HCT116 (cell line): ENCODE measurements at regions of chr17 and their contacts with region 1.

Region 1: GRCh38 chr17:27601069-27601975 is 29.7 kb upstream of the LGALS9 start:
- DNase-seq: peak; percentile 50
- ATAC-seq: peak; percentile 57
- H3K4me3 ChIP-seq: no peak overlapping the region
- H3K27ac ChIP-seq: 0 out of 2 replicates have a peak overlapping the region, but pooled peaks have one; percentile 14
- H3K4me1 ChIP-seq: peaks cover 12 to 16% of the 10 kb centered on the region in 2 experiments
- H3K27me3 ChIP-seq: no peaks in the 10 kb centered on the region
- CTCF ChIP-seq: peak; percentile 77 to 97 (median 87); a peak in 5 of 6 replicates
- POLR2A ChIP-seq: no peak
- RAD21 ChIP-seq: peak; percentile 83

Region 2: DNA sequence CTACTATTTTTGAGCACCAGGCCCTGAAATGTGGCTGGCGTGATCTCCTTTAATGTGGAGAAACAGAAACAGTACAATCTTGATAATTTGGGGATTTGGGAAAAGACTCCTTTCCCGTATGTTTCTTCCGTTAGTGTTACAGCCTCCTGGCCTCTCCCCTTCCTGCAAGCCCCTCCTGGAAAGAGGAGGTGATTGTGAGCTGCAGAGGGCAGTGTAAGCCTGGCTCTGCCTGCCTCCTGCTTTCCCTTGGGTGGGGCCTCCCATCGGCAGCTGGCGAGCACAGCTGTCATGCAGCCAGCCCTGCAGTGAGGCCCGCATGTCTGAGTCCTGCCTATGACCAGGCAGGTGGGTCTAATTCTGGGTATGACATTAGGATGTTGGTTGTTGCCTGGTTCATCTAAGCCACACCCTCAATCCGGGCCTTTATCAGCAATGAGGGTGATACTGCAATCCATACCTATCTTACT is 356.1 kb before region 1 on chr17:
- CTCF ChIA-PET with region 1: interaction called, 11 read pairs
- POLR2A ChIA-PET with region 1: no interaction called
- RAD21 ChIA-PET with region 1: interaction called, 3 to 6 read pairs
- intact Hi-C with region 1: loop called (anchors 2 kb)
- DNase-seq: peak; percentile 69
- ATAC-seq: peak; percentile 99
- H3K4me3 ChIP-seq: 0 out of 4 replicates have a peak overlapping the region, but pooled peaks of 1 of the 2 experiments have one; percentile 1
- H3K27ac ChIP-seq: no peak overlapping the region
- H3K4me1 ChIP-seq: peaks cover 22 to 39% of the 10 kb centered on the region in 2 experiments
- H3K27me3 ChIP-seq: no peaks in the 10 kb centered on the region
- CTCF ChIP-seq: peak; percentile 60 to 92 (median 73)
- POLR2A ChIP-seq: no peak
- RAD21 ChIP-seq: peak; percentile 98

Region 3: GRCh38 chr17:27353461-27354050 is 247.8 kb before region 1 on chr17:
- CTCF ChIA-PET with region 1: interaction called, 27 read pairs
- POLR2A ChIA-PET with region 1: interaction called, 6 read pairs
- RAD21 ChIA-PET with region 1: interaction called, 5 to 7 read pairs
- intact Hi-C with region 1: loop called (anchors 1 kb)
- DNase-seq: peak; percentile 78
- ATAC-seq: peak; percentile 74
- H3K4me3 ChIP-seq: peak overlapping the region; percentile 85 to 95
- H3K27ac ChIP-seq: peak overlapping the region; percentile 93
- H3K4me1 ChIP-seq: peaks cover 24 to 48% of the 10 kb centered on the region in 2 experiments
- H3K27me3 ChIP-seq: no peaks in the 10 kb centered on the region
- CTCF ChIP-seq: peak; percentile 58 to 85 (median 73)
- POLR2A ChIP-seq: peak; percentile 43
- RAD21 ChIP-seq: peak; percentile 70

Region 4: DNA sequence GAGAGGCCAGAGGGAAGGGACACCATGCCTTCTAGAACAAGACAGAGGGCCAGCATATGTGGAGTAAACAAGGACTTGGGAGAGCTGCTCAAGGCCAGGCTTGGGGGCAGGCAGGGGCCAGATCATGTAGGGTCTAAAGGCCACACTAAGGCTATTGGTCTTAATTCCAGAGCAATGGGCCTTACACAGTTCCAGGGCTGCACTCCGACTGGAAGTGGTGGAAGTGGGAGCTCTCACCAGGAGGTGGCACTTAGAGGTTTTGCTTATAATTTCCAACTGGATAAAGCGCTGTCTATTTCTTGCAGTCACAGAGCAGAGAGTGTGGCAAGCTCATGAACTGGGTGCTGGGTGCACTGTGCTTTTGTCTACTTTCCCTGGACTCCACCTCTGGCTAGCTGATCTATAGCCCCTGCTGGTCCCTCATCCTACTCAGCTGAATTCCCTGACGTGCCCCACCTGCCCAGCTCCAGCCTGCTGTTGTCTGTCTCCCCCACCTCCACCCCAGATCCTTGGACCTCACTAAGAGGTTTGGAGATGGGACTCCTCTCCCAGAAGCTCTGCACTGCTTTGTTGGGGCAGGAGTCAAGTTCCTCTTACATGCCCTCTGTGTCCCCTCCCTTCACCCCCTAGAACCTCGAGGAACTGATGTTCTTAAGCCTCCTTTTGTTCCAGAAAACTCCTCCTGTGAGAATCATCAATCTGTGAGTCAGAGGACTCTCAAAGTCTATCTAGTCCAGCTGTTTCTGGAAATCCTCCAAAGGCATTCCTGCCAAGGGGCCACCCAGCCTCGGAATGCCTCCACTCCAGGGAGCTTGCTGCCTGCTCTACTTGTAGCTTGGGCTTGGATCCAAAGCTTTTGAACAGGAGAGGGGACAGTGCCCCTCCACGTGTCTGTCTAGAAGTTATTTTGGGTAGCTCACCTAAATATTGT is 193.1 kb before region 1 on chr17:
- CTCF ChIA-PET with region 1: interaction called, 10 read pairs
- POLR2A ChIA-PET with region 1: no interaction called
- RAD21 ChIA-PET with region 1: interaction called in 1 of 2 experiments, 5 read pairs
- intact Hi-C with region 1: no loop called
- DNase-seq: peak; percentile 7
- ATAC-seq: peak; percentile 53
- H3K4me3 ChIP-seq: no peak overlapping the region
- H3K27ac ChIP-seq: no peak overlapping the region
- H3K4me1 ChIP-seq: peaks cover 10 to 19% of the 10 kb centered on the region in 2 experiments
- H3K27me3 ChIP-seq: no peaks in the 10 kb centered on the region
- CTCF ChIP-seq: no peak
- POLR2A ChIP-seq: no peak
- RAD21 ChIP-seq: 0 out of 2 replicates have a peak, but pooled peaks have one; percentile 5

Region 5: DNA sequence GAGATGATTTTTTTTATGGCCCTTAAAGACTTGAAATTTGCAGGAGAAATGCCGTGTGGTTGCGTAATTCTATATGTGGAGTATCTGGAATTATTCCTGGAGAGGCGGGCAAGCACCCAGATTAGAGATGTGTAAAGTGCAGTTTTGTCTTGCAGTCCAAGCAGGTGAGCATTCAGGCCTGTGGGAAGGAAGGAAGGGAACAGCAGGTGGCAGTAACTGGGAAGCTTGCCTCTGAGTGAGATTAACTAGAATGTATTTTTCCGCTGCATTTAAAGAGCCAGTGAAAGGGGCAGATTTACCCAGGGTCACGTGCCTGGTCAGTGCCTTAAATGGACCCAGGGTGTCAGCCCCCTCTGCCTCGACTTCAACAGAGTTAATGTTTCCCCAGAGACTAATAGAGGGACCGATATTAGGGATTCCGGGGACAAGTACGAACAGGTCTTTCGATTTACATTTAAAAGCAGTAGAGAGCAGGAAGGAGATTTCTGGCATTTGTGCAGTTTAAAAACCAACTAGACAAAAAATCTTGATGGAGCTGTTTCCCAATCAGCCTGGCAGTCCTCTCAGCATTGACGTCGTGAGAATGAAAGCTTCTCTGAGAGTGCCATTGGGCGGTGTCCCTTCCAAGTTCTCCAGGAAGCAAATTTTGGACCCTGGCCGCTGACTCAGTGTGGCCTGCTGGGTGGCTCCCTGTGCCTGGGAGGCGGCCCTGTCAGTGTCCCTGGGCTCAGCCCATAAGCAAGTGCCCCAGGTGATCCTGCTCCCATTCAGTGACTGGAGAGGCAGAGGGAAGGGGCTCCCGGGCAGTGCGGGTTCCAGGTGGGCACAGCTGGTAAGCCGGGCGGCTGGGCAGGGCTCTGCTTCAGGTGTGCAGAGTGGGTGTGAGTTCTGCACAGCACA is 106.9 kb before region 1 on chr17:
- CTCF ChIA-PET with region 1: interaction called, 15 read pairs
- POLR2A ChIA-PET with region 1: no interaction called
- RAD21 ChIA-PET with region 1: interaction called, 6 to 7 read pairs
- intact Hi-C with region 1: loop called (anchors 1 kb)
- DNase-seq: peak; percentile 51
- ATAC-seq: peak; percentile 87
- H3K4me3 ChIP-seq: peak overlapping the region; percentile 32 to 36
- H3K27ac ChIP-seq: peak overlapping the region; percentile 31
- H3K4me1 ChIP-seq: peaks cover 26 to 50% of the 10 kb centered on the region in 2 experiments
- H3K27me3 ChIP-seq: no peaks in the 10 kb centered on the region
- CTCF ChIP-seq: peak; percentile 56 to 70 (median 66); a peak in 5 of 6 replicates
- POLR2A ChIP-seq: no peak
- RAD21 ChIP-seq: peak; percentile 64

Region 6: DNA sequence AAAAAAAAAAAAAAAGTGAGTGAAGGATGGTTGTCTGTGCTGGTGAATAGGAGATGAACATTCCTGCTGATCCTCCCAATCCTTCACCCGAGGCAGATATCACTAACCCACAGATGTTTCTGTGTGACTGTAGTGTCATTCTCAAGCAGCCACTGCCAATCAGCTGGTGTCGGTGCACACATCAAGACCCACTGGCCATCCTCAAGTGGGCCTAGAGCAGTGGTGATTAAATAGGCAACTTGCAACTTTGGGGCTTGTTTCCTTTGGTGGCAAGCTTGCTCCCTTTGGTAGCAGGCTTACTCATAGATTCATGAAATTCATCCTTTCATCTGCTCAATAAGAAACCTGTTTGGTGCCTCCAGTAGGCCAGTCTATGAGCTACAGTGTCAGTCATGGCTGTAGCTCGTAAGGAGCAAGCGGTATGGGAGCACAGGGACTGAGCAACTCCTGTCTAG is 21.4 kb before region 1 on chr17:
- CTCF ChIA-PET with region 1: interaction called, 14 read pairs
- POLR2A ChIA-PET with region 1: no interaction called
- RAD21 ChIA-PET with region 1: no interaction called
- intact Hi-C with region 1: no loop called
- DNase-seq: no peak
- ATAC-seq: no peak
- H3K4me3 ChIP-seq: no peak overlapping the region
- H3K27ac ChIP-seq: no peak overlapping the region
- H3K4me1 ChIP-seq: peaks cover 54 to 66% of the 10 kb centered on the region in 2 experiments
- H3K27me3 ChIP-seq: no peaks in the 10 kb centered on the region
- CTCF ChIP-seq: no peak
- POLR2A ChIP-seq: no peak
- RAD21 ChIP-seq: no peak

Region 7: GRCh38 chr17:27701963-27702362 is 100.6 kb after region 1 on chr17:
- CTCF ChIA-PET with region 1: no interaction called
- POLR2A ChIA-PET with region 1: no interaction called
- RAD21 ChIA-PET with region 1: no interaction called
- intact Hi-C with region 1: no loop called
- DNase-seq: no peak
- ATAC-seq: no peak
- H3K4me3 ChIP-seq: no peak overlapping the region
- H3K27ac ChIP-seq: no peak overlapping the region
- H3K4me1 ChIP-seq: no peaks in the 10 kb centered on the region
- H3K27me3 ChIP-seq: no peaks in the 10 kb centered on the region
- CTCF ChIP-seq: no peak
- POLR2A ChIP-seq: no peak
- RAD21 ChIP-seq: no peak

Region 8: DNA sequence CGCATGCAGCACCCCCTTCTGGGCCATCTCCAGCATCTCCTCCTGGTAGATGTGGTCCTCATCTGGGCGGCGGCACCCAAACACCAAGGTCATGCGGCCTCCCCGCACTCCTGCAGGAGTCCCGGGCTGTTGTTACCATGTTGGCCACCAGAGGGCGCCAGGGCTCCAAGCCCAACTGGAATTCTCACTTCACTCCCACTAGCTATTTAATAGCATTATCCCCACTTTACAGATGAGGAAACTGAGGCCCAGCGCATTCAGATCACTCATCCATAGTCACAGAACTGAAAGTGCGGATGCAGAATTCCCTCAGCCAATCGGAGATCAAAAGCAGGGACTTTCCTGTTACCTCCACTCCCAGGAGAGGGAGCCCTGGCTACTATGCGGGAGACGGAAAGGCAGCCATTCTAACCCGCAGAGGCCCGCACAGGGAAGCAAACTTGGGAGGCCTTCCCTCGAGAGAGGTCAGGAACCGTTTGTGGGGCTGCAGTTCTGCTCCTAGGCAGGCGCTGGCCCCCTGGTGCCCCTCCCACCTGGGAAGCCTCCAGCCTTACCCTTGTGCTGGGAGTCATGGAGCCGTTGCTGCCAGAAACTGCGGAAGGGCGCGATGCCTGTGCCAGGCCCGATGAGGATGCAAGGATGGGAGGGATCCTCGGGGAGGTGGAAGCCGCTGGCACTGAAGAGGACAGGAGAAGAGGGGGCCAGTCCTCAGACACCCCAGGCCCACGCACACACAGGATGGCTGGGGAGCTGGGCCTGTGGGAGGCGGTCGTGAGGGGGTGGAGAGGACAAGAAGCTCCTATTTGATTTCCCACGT is 159.0 kb after region 1 on chr17:
- CTCF ChIA-PET with region 1: no interaction called
- POLR2A ChIA-PET with region 1: no interaction called
- RAD21 ChIA-PET with region 1: no interaction called
- intact Hi-C with region 1: loop called (anchors 2 kb)
- DNase-seq: peak; percentile 24
- ATAC-seq: peak; percentile 86
- H3K4me3 ChIP-seq: no peak overlapping the region
- H3K27ac ChIP-seq: no peak overlapping the region
- H3K4me1 ChIP-seq: no peaks in the 10 kb centered on the region
- H3K27me3 ChIP-seq: no peaks in the 10 kb centered on the region; the same call in none of the 2 replicates
- CTCF ChIP-seq: peak; percentile 92 to 94 (median 93)
- POLR2A ChIP-seq: no peak
- RAD21 ChIP-seq: peak; percentile 77